ENCODE measurements at regions of chr1 and their contacts with region 1.

Region 1: GRCh38 chr1:64823691-64824476 is 79.0 kb downstream of the RAVER2 start:
- DNase-seq: peak in 4 of 5 donors; percentile 34 to 61 (median 52)
- ATAC-seq: peak; percentile 53 to 71 (median 67)
- H3K4me3 ChIP-seq: peak overlapping the region in 4 of 12 donors; percentile 20 to 37 (median 29)
- H3K27ac ChIP-seq: no peak overlapping the region
- H3K4me1 ChIP-seq: peaks cover 0 to 28% (median 1%) of the 10 kb centered on the region in 12 donors
- H3K27me3 ChIP-seq: no peaks in the 10 kb centered on the region
- CTCF ChIP-seq: peak; percentile 74 to 91 (median 84)
- POLR2A ChIP-seq: no peak

Region 2: GRCh38 chr1:64387389-64388285 is 436.2 kb before region 1 on chr1:
- intact Hi-C with region 1: loop called in 1 of 10 experiments (anchors 10 kb)
- DNase-seq: peak in 1 of 5 donors; percentile 18
- ATAC-seq: no peak
- H3K4me3 ChIP-seq: no peak overlapping the region
- H3K27ac ChIP-seq: peak overlapping the region in 3 of 12 donors; percentile 18 to 45 (median 41)
- H3K4me1 ChIP-seq: peaks cover 0 to 9% (median 0%) of the 10 kb centered on the region in 12 donors
- H3K27me3 ChIP-seq: no peaks in the 10 kb centered on the region
- CTCF ChIP-seq: no peak
- POLR2A ChIP-seq: no peak

Region 3: DNA sequence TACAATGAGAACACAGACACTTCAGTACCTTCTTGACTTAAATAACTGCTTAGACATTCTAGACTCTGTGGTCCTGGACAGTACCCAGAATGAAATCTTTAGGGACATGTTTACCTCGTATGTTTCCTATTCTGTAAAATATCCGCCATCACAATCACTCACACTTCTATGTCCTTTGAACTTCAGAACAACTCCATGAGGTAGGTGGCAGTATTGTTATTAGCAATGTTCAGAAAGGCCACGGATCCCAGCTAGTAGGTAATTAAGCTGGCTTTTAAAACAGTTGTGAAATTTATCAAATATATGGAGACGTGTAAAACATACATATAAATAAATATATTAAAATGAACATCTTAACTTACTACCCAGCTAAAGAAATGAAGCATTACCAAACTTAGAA is 270.6 kb before region 1 on chr1:
- intact Hi-C with region 1: loop called in 4 of 10 experiments (anchors 5 to 10 kb)
- DNase-seq: no peak
- ATAC-seq: no peak
- H3K4me3 ChIP-seq: no peak overlapping the region
- H3K27ac ChIP-seq: no peak overlapping the region
- H3K4me1 ChIP-seq: peaks cover 0 to 23% (median 0%) of the 10 kb centered on the region in 12 donors
- H3K27me3 ChIP-seq: no peaks in the 10 kb centered on the region
- CTCF ChIP-seq: peak in 6 of 12 donors; percentile 19 to 43 (median 24)
- POLR2A ChIP-seq: no peak

Region 4: GRCh38 chr1:64675718-64676345 is 148.1 kb before region 1 on chr1:
- intact Hi-C with region 1: loop called in 1 of 10 experiments (anchors 5 kb)
- DNase-seq: no peak
- ATAC-seq: no peak
- H3K4me3 ChIP-seq: no peak overlapping the region
- H3K27ac ChIP-seq: no peak overlapping the region
- H3K4me1 ChIP-seq: peaks cover 0 to 9% (median 0%) of the 10 kb centered on the region in 12 donors
- H3K27me3 ChIP-seq: no peaks in the 10 kb centered on the region
- CTCF ChIP-seq: peak; percentile 58 to 85 (median 72)
- POLR2A ChIP-seq: no peak

Region 5: GRCh38 chr1:64686828-64687724 is 136.8 kb before region 1 on chr1:
- intact Hi-C with region 1: loop called (anchors 1 to 5 kb)
- DNase-seq: no peak
- ATAC-seq: peak in 3 of 4 donors; percentile 64 to 79 (median 75)
- H3K4me3 ChIP-seq: no peak overlapping the region
- H3K27ac ChIP-seq: no peak overlapping the region
- H3K4me1 ChIP-seq: peaks cover 0 to 17% (median 8%) of the 10 kb centered on the region in 12 donors
- H3K27me3 ChIP-seq: no peaks in the 10 kb centered on the region
- CTCF ChIP-seq: peak; percentile 77 to 92 (median 86)
- POLR2A ChIP-seq: no peak

Region 6: GRCh38 chr1:64744492-64745180 is 79.2 kb before region 1 on chr1 and contains the start of gene RAVER2:
- intact Hi-C with region 1: loop called (anchors 2 to 5 kb)
- DNase-seq: peak; percentile 78 to 88 (median 83)
- ATAC-seq: peak; percentile 75 to 91 (median 88)
- H3K4me3 ChIP-seq: peak within 1 kb of the TSS; percentile 66 to 96 (median 86)
- H3K27ac ChIP-seq: peak within 1 kb of the TSS; percentile 62 to 88 (median 84)
- H3K4me1 ChIP-seq: peaks cover 0 to 41% (median 18%) of the 10 kb centered on the region in 12 donors
- H3K27me3 ChIP-seq: no peaks in the 10 kb centered on the region
- CTCF ChIP-seq: peak in 11 of 12 donors; percentile 14 to 71 (median 53)
- POLR2A ChIP-seq: peak in 1 of 2 donors; percentile 20
- total RNA-seq, gene RAVER2: 16.5 to 25.8 (median 20.4) TPM